CD8-positive, alpha-beta T cell (primary cell): ENCODE measurements at regions of chr16 and their contacts with region 1.

Region 1: GRCh38 chr16:84738255-84739038 is 38.6 kb downstream of the USP10 start:
- DNase-seq: peak; percentile 44 to 87 (median 78)
- ATAC-seq: peak; percentile 82
- H3K4me3 ChIP-seq: peak overlapping the region in 1 of 2 experiments; percentile 18
- H3K4me3 Mint-ChIP-seq: peak overlapping the region; percentile 53
- H3K27ac ChIP-seq: no peak overlapping the region
- H3K27ac Mint-ChIP-seq: peak overlapping the region; percentile 64
- H3K4me1 ChIP-seq: peaks cover 23% of the 10 kb centered on the region
- H3K4me1 Mint-ChIP-seq: peaks cover 48% of the 10 kb centered on the region
- H3K27me3 ChIP-seq: no peaks in the 10 kb centered on the region
- H3K27me3 Mint-ChIP-seq: no peaks in the 10 kb centered on the region
- CTCF ChIP-seq: peak; percentile 84

Region 2: DNA sequence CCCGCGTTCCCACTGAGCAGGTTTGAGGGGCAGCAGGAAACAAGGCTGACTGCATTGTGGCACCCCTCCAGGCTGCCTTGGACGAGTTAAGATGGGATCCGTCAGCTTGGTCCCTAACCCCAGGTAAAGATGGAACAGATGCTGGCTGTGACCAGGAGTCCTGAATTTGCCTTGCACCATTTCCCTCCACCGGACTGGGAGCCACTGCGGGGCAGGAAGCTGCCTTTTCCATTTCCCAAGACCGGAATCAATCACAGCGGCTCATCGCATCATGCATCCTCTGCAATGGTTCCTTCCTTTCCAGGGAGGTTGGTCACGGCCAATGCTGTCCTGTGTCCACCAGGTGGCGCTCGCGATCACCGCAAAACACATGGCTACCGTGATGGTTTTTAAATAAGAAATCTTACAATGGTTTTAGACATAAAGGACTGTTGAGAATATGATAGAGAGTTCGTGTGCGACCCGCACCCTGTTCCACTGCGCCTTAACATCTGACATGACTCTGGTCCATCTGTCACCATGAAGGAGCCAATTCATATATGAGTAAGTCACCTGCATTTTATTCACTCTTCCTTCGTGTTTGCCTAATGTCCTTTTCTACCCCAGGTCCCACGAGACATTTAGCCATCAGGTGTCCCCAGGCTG is 227.1 kb before region 1 on chr16:
- CTCF ChIA-PET with region 1: interaction called, 12 read pairs
- POLR2A ChIA-PET with region 1: interaction called, 7 read pairs
- intact Hi-C with region 1: loop called in 1 of 2 experiments (anchors 1 kb)
- DNase-seq: peak; percentile 75 to 93 (median 84)
- ATAC-seq: peak; percentile 16
- H3K4me3 ChIP-seq: no peak overlapping the region
- H3K4me3 Mint-ChIP-seq: no peak overlapping the region
- H3K27ac ChIP-seq: no peak overlapping the region
- H3K27ac Mint-ChIP-seq: peak overlapping the region; percentile 60
- H3K4me1 ChIP-seq: peaks cover 85% of the 10 kb centered on the region
- H3K4me1 Mint-ChIP-seq: peaks cover 73% of the 10 kb centered on the region
- H3K27me3 ChIP-seq: peaks cover 0 to 2% of the 10 kb centered on the region in 2 experiments
- H3K27me3 Mint-ChIP-seq: no peaks in the 10 kb centered on the region
- CTCF ChIP-seq: peak; percentile 95

Region 3: GRCh38 chr16:84672276-84673202 is 65.9 kb before region 1 on chr16:
- CTCF ChIA-PET with region 1: interaction called, 45 read pairs
- POLR2A ChIA-PET with region 1: no interaction called
- intact Hi-C with region 1: loop called in 1 of 2 experiments (anchors 1 kb)
- DNase-seq: peak; percentile 64 to 91 (median 80)
- ATAC-seq: peak; percentile 97
- H3K4me3 ChIP-seq: no peak overlapping the region
- H3K4me3 Mint-ChIP-seq: no peak overlapping the region
- H3K27ac ChIP-seq: no peak overlapping the region
- H3K27ac Mint-ChIP-seq: no peak overlapping the region
- H3K4me1 ChIP-seq: no peaks in the 10 kb centered on the region
- H3K4me1 Mint-ChIP-seq: peaks cover 6% of the 10 kb centered on the region
- H3K27me3 ChIP-seq: no peaks in the 10 kb centered on the region
- H3K27me3 Mint-ChIP-seq: no peaks in the 10 kb centered on the region
- CTCF ChIP-seq: peak; percentile 83

Region 4: GRCh38 chr16:84714028-84714427 is 24.4 kb before region 1 on chr16:
- CTCF ChIA-PET with region 1: interaction called, 28 read pairs
- POLR2A ChIA-PET with region 1: interaction called, 3 read pairs
- intact Hi-C with region 1: no loop called
- DNase-seq: no peak
- ATAC-seq: no peak
- H3K4me3 ChIP-seq: no peak overlapping the region
- H3K4me3 Mint-ChIP-seq: no peak overlapping the region
- H3K27ac ChIP-seq: no peak overlapping the region
- H3K27ac Mint-ChIP-seq: peak overlapping the region; percentile 62
- H3K4me1 ChIP-seq: peaks cover 34% of the 10 kb centered on the region
- H3K4me1 Mint-ChIP-seq: peaks cover 87% of the 10 kb centered on the region
- H3K27me3 ChIP-seq: no peaks in the 10 kb centered on the region
- H3K27me3 Mint-ChIP-seq: no peaks in the 10 kb centered on the region
- CTCF ChIP-seq: no peak

Region 5: DNA sequence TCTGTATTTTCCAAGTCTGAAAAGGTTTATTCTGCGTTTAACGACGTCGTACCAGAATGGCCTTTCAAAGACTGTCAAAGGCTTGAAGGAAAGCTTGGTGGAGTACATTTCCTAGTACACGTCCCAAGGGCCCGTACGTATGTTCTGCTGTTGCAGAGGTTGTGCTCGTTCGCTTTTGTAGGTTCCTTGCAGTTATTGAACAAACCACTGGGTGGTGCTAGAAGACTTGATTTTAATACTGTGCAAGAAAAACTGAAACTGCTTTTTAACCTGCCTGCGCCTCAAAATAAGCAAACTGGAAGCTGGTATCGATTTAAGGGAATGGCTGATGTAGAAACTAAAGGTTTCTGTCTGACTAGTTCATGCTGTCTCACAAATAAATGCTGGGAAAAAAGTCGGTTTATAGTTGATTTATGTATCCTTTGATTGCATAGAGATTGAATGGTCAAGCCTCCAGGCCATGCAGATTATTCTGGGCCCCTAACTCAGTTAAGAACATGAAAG is 16.0 kb after region 1 on chr16:
- CTCF ChIA-PET with region 1: interaction called, 105 read pairs
- POLR2A ChIA-PET with region 1: interaction called, 3 read pairs
- intact Hi-C with region 1: no loop called
- DNase-seq: peak; percentile 42 to 87 (median 63)
- ATAC-seq: peak; percentile 72
- H3K4me3 ChIP-seq: no peak overlapping the region
- H3K4me3 Mint-ChIP-seq: peak overlapping the region; percentile 53
- H3K27ac ChIP-seq: peak overlapping the region in 1 of 2 experiments; percentile 2
- H3K27ac Mint-ChIP-seq: peak overlapping the region; percentile 45
- H3K4me1 ChIP-seq: peaks cover 45% of the 10 kb centered on the region
- H3K4me1 Mint-ChIP-seq: peaks cover 81% of the 10 kb centered on the region
- H3K27me3 ChIP-seq: no peaks in the 10 kb centered on the region
- H3K27me3 Mint-ChIP-seq: no peaks in the 10 kb centered on the region
- CTCF ChIP-seq: peak; percentile 93

Region 6: GRCh38 chr16:85195900-85196772 is 457.7 kb after region 1 on chr16:
- CTCF ChIA-PET with region 1: no interaction called
- POLR2A ChIA-PET with region 1: no interaction called
- intact Hi-C with region 1: no loop called
- DNase-seq: no peak
- ATAC-seq: no peak
- H3K4me3 ChIP-seq: no peak overlapping the region
- H3K4me3 Mint-ChIP-seq: no peak overlapping the region
- H3K27ac ChIP-seq: no peak overlapping the region
- H3K27ac Mint-ChIP-seq: no peak overlapping the region
- H3K4me1 ChIP-seq: no peaks in the 10 kb centered on the region
- H3K4me1 Mint-ChIP-seq: no peaks in the 10 kb centered on the region
- H3K27me3 ChIP-seq: no peaks in the 10 kb centered on the region
- H3K27me3 Mint-ChIP-seq: peaks cover 3% of the 10 kb centered on the region
- CTCF ChIP-seq: no peak